ENCODE measurements at regions of chr10 and their contacts with region 1.

Region 1: DNA sequence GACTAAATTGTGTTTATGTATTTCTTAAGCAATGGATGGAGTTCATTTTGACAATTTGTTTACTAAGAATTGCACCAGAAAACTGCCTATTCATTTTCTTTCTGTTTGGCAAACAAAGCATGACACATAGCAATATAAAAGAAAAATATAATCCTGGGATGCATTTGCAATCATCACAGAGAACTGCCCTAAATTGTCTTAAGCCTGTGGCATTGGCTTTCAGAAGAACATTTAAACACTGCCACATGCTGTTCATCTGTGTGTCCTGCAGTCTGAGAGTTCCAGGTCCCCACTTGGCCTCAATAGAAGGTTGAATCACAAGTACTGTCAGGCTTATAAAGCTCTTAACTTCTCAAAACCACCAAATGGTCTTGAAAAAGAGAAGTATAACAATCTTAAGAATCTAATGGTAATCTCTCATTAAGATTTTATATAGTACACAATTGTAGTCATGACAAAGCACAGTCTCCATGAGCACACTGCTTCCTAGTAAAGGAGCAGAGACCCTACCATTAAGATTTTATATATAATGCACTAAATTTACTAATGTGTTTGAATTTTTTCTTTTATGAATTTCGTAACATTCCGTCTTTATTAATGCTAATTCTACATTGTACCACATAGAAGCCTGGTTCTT is 29.9 kb downstream of the RNLS start:
- DNase-seq: peak; percentile 45
- ATAC-seq: peak; percentile 99
- H3K4me3 ChIP-seq: no peak overlapping the region
- H3K27ac ChIP-seq: no peak overlapping the region; the same call in 1 of the 2 replicates
- H3K4me1 ChIP-seq: 0 out of 2 replicates have a peak, but pooled peaks cover 5% of the 10 kb centered on the region
- H3K27me3 ChIP-seq: no peaks in the 10 kb centered on the region
- CTCF ChIP-seq: peak; percentile 84 to 94 (median 90)
- EP300 ChIP-seq: no peak
- POLR2A ChIP-seq: no peak
- RAD21 ChIP-seq: peak; percentile 97

Region 2: DNA sequence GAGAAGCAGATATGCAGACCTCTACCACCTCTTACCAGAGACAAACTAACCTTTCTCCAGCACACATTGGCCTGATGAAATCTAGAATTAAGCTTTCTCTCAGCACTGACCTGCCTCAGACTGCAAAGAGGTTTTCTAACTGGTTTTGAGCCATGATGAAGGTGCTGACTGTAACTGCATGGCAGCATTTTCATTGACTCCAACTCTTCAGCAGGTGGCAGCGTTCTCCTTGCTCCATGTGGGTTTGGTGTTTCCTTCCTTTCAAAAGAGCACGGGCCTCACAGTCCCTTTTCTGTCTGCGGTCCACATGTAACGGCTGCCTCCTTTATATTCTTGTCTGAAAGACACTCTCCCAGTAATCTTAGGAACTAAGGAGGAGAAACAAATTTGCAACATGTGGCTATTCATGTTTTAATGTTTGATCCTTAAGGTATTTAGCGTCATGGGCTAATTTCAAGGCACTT is 702.5 kb before region 1 on chr10:
- CTCF ChIA-PET with region 1: interaction called, 47 read pairs
- POLR2A ChIA-PET with region 1: no interaction called
- RAD21 ChIA-PET with region 1: interaction called, 14 read pairs
- SMC1A ChIA-PET with region 1: interaction called, 9 read pairs
- in situ Hi-C with region 1: no loop called
- intact Hi-C with region 1: no loop called
- DNase-seq: no peak
- ATAC-seq: peak; percentile 96
- H3K4me3 ChIP-seq: no peak overlapping the region
- H3K27ac ChIP-seq: no peak overlapping the region
- H3K4me1 ChIP-seq: no peaks in the 10 kb centered on the region
- H3K27me3 ChIP-seq: no peaks in the 10 kb centered on the region
- CTCF ChIP-seq: peak; percentile 58 to 74 (median 67); a peak in 5 of 6 replicates
- EP300 ChIP-seq: no peak
- POLR2A ChIP-seq: no peak
- RAD21 ChIP-seq: peak; percentile 74

Region 3: GRCh38 chr10:87976101-87976743 is 577.0 kb before region 1 on chr10:
- CTCF ChIA-PET with region 1: no interaction called
- POLR2A ChIA-PET with region 1: no interaction called
- RAD21 ChIA-PET with region 1: no interaction called
- SMC1A ChIA-PET with region 1: no interaction called
- in situ Hi-C with region 1: loop called (anchors 10 kb)
- intact Hi-C with region 1: no loop called
- DNase-seq: no peak
- ATAC-seq: no peak
- H3K4me3 ChIP-seq: no peak overlapping the region
- H3K27ac ChIP-seq: no peak overlapping the region
- H3K4me1 ChIP-seq: no peaks in the 10 kb centered on the region
- H3K27me3 ChIP-seq: no peaks in the 10 kb centered on the region
- CTCF ChIP-seq: no peak
- EP300 ChIP-seq: no peak
- POLR2A ChIP-seq: no peak
- RAD21 ChIP-seq: no peak

Region 4: GRCh38 chr10:88216976-88217375 is 336.3 kb before region 1 on chr10:
- CTCF ChIA-PET with region 1: no interaction called
- POLR2A ChIA-PET with region 1: no interaction called
- RAD21 ChIA-PET with region 1: no interaction called
- SMC1A ChIA-PET with region 1: no interaction called
- in situ Hi-C with region 1: no loop called
- intact Hi-C with region 1: loop called (anchors 1 kb)
- DNase-seq: no peak
- ATAC-seq: peak; percentile 84
- H3K4me3 ChIP-seq: no peak overlapping the region
- H3K27ac ChIP-seq: no peak overlapping the region
- H3K4me1 ChIP-seq: peaks cover 3% of the 10 kb centered on the region; the same call in 1 of the 2 replicates
- H3K27me3 ChIP-seq: no peaks in the 10 kb centered on the region
- CTCF ChIP-seq: peak; percentile 15 to 33 (median 32); a peak in 4 of 6 replicates
- EP300 ChIP-seq: no peak
- POLR2A ChIP-seq: no peak
- RAD21 ChIP-seq: peak; percentile 64

Region 5: DNA sequence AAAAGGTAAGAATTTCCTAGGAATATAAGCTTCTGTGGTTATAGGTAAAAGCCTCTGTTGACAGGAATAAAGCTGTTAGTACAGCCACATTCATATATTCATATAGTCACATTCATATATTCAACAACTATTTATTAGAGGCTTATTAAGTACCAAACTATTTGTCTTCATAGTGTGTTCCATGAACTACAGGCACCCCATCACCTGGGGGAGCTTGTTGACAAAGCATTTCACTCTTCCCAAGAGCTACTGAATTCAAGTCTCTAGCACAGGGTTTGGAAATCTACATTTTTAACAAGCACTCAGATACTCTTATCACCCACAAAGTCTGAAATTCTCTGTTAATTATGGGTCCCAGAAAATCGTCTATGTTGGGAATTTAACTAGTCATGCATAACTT is 80.7 kb before region 1 on chr10:
- CTCF ChIA-PET with region 1: interaction called, 5 read pairs
- POLR2A ChIA-PET with region 1: no interaction called
- RAD21 ChIA-PET with region 1: interaction called, 3 read pairs
- SMC1A ChIA-PET with region 1: interaction called, 3 read pairs
- in situ Hi-C with region 1: no loop called
- intact Hi-C with region 1: loop called (anchors 1 kb)
- DNase-seq: no peak
- ATAC-seq: peak; percentile 63
- H3K4me3 ChIP-seq: no peak overlapping the region
- H3K27ac ChIP-seq: no peak overlapping the region
- H3K4me1 ChIP-seq: no peaks in the 10 kb centered on the region
- H3K27me3 ChIP-seq: no peaks in the 10 kb centered on the region
- CTCF ChIP-seq: peak in 1 of 3 experiments; percentile 20; a peak in 2 of 6 replicates
- EP300 ChIP-seq: no peak
- POLR2A ChIP-seq: no peak
- RAD21 ChIP-seq: peak; percentile 45